ENCODE measurements at regions of chr6 and their contacts with region 1.

Region 1: GRCh38 chr6:27479319-27480182 is 6.6 kb upstream of the ZNF184 start:
- DNase-seq: peak; percentile 92 to 93
- ATAC-seq: peak; percentile 77 to 87 (median 82)
- H3K4me3 ChIP-seq: peak overlapping the region; percentile 92
- H3K4me3 Mint-ChIP-seq: no peak overlapping the region
- H3K27ac ChIP-seq: peak overlapping the region; percentile 99
- H3K27ac Mint-ChIP-seq: no peak overlapping the region
- H3K4me1 ChIP-seq: peaks cover 13% of the 10 kb centered on the region
- H3K4me1 Mint-ChIP-seq: peaks cover 0 to 4% of the 10 kb centered on the region in 2 donors
- H3K27me3 ChIP-seq: no peaks in the 10 kb centered on the region
- H3K27me3 Mint-ChIP-seq: no peaks in the 10 kb centered on the region
- CTCF ChIP-seq: no peak

Region 2: DNA sequence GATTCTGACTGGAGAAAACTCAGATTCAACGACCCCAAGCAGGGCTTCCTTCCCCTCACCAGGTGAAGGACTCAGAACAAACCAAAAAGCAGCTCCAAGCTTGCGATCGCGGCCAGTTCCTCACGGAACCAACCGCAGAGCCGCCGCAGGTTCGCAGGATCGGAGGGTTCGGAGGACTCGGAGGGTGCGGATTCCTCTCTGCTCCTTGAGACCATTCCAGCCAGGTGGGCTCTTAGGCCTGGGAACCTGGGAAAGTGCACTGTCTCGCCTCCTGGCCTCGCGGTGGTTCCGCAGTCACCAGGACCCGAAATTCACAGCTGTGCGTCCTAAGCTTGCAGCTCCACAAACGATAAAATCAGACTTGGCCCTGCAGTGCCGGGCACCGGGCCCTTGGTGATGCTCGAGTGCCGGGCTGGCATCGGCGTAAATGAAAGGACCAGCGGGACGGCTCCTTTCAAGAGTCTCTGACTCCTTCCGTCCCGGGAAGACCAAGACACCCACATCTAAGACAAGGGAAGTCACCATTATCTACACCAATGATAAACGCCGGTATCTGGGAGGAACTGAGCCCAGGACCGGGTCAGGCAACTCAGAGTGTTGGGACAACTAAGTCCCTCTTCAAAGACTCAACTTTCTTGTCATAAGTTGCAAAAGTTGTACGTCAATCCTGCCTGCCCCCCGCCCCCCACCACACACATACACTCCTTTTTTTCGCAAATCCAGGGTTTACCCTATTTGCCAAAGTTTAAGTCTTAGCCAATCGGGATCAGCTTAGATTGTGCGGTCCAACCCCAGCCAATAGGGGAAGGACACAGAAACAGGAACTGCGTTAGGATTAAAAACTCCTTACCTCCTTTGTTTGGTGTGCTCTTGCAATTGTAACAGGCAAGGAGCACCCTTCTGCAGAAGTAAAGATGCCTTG is 301.8 kb before region 1 on chr6:
- intact Hi-C with region 1: loop called (anchors 2 kb)
- DNase-seq: peak; percentile 70 to 86
- ATAC-seq: peak; percentile 79 to 88 (median 83)
- H3K4me3 ChIP-seq: peak overlapping the region; percentile 81
- H3K4me3 Mint-ChIP-seq: peak overlapping the region; percentile 95
- H3K27ac ChIP-seq: peak overlapping the region; percentile 66
- H3K27ac Mint-ChIP-seq: peak overlapping the region; percentile 92 to 98
- H3K4me1 ChIP-seq: peaks cover 13% of the 10 kb centered on the region
- H3K4me1 Mint-ChIP-seq: peaks cover 25 to 26% of the 10 kb centered on the region in 2 donors
- H3K27me3 ChIP-seq: no peaks in the 10 kb centered on the region
- H3K27me3 Mint-ChIP-seq: peaks cover 0 to 9% of the 10 kb centered on the region in 2 donors
- CTCF ChIP-seq: peak; percentile 59

Region 3: GRCh38 chr6:27518881-27519795 is 39.6 kb after region 1 on chr6:
- intact Hi-C with region 1: loop called (anchors 2 kb)
- DNase-seq: peak; percentile 49 to 88
- ATAC-seq: peak; percentile 61 to 81 (median 81)
- H3K4me3 ChIP-seq: peak overlapping the region; percentile 82
- H3K4me3 Mint-ChIP-seq: peak overlapping the region; percentile 91
- H3K27ac ChIP-seq: peak overlapping the region; percentile 71
- H3K27ac Mint-ChIP-seq: peak overlapping the region; percentile 87 to 88
- H3K4me1 ChIP-seq: peaks cover 11% of the 10 kb centered on the region
- H3K4me1 Mint-ChIP-seq: peaks cover 16 to 17% of the 10 kb centered on the region in 2 donors
- H3K27me3 ChIP-seq: peaks cover 9% of the 10 kb centered on the region
- H3K27me3 Mint-ChIP-seq: peaks cover 29 to 46% of the 10 kb centered on the region in 2 donors
- CTCF ChIP-seq: peak; percentile 79

Region 4: GRCh38 chr6:27864906-27865849 is 385.6 kb after region 1 on chr6:
- intact Hi-C with region 1: loop called (anchors 1 kb)
- DNase-seq: peak; percentile 63 to 96
- ATAC-seq: peak; percentile 76 to 89 (median 81)
- H3K4me3 ChIP-seq: peak overlapping the region; percentile 69
- H3K4me3 Mint-ChIP-seq: peak overlapping the region; percentile 90
- H3K27ac ChIP-seq: peak overlapping the region; percentile 82
- H3K27ac Mint-ChIP-seq: peak overlapping the region; percentile 92 to 94
- H3K4me1 ChIP-seq: peaks cover 35% of the 10 kb centered on the region
- H3K4me1 Mint-ChIP-seq: peaks cover 44% of the 10 kb centered on the region in 2 donors
- H3K27me3 ChIP-seq: no peaks in the 10 kb centered on the region
- H3K27me3 Mint-ChIP-seq: no peaks in the 10 kb centered on the region
- CTCF ChIP-seq: no peak

Region 5: DNA sequence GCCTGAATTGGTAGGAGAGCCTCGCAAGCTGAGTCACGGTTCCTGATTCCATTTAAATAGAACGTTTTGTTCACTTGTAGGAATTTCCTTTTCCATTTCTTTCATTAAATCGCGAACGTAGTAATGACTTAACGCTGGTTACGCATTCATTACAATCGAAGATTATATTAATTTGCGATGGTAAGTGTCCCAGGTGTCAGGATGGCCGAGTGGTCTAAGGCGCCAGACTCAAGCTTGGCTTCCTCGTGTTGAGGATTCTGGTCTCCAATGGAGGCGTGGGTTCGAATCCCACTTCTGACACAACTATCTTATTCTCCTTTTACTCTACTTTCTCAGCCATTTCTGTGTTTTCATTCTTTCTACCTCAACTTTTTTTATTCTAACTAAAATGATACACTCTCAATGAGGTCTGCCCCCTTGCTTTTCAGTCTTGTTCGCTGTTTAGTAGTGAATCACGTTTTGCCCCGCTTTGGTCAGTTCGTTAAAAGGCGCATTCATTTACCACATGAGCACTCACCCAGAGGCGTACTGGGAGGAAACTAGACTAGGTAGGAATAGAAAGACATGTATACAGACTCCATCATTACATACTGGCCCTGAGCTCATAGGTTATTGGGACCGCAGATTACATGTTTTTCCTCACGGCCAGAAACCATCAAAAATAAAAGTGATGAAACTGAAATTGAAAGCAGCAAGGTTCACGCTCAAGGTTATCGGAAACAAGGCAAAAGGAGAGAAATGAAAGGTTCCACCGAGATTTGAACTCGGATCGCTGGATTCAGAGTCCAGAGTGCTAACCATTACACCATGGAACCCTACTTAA is 1461.5 kb after region 1 on chr6:
- intact Hi-C with region 1: loop called (anchors 2 kb)
- DNase-seq: peak; percentile 68 to 90
- ATAC-seq: peak; percentile 65 to 86 (median 78)
- H3K4me3 ChIP-seq: peak overlapping the region; percentile 61
- H3K4me3 Mint-ChIP-seq: peak overlapping the region; percentile 99
- H3K27ac ChIP-seq: peak overlapping the region; percentile 85
- H3K27ac Mint-ChIP-seq: peak overlapping the region; percentile 96 to 98
- H3K4me1 ChIP-seq: peaks cover 35% of the 10 kb centered on the region
- H3K4me1 Mint-ChIP-seq: peaks cover 48 to 51% of the 10 kb centered on the region in 2 donors
- H3K27me3 ChIP-seq: no peaks in the 10 kb centered on the region
- H3K27me3 Mint-ChIP-seq: peaks cover 0 to 7% of the 10 kb centered on the region in 2 donors
- CTCF ChIP-seq: no peak

Measured in natural killer cell (primary cell).